A673 (cell line): ENCODE measurements at regions of chr22 and their contacts with region 1.

Region 1: DNA sequence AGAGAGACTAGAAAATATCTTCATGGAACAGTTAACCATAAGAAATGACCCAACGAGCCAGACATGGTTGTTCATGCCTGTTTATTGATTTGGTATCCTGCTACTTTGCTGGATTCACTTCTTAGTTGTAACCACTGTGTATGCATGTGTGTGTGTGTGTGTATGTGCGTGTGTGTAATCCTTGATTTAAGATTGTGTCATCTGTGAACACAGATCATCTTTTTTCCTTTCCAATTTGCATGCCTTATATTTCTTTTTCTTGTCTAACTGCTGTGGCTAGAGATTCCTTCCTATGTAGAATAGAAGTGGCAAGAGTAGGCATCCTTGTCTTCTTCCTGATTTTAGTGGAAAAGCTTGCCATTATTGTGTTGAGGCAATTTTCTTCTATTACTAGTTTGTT is 16.4 kb upstream of the CLTCL1 start:
- DNase-seq: no peak
- H3K4me3 ChIP-seq: no peak overlapping the region
- H3K27ac ChIP-seq: no peak overlapping the region
- H3K4me1 ChIP-seq: no peaks in the 10 kb centered on the region
- H3K27me3 ChIP-seq: no peaks in the 10 kb centered on the region
- CTCF ChIP-seq: no peak

Region 2: DNA sequence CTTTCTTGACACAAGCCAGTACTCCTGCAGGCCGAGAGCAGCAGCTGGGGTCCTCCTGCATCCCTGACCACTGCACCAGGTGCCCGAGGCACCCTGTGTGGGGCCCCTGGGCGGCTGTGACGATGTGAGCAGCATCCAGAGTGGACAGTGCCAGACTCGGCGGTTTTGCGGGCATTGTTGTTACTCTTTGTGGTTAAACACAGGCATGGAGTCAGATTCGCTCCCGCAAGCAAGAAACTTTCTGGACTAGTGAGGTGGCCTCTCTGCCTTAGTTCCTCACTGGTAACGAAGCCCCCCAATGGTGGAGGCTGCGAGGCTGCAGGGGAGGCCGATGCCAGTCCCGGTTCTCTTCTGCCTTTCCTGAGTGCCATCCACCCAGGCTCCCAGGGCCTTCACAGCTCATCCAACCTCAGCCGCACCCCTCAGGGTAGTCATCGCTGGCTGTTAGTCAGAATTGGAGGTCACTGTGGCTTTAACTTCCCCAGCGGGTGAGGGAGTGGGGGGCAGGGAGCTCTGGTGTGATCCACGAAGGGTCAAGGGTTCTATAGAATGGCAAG is 220.1 kb after region 1 on chr22:
- CTCF ChIA-PET with region 1: interaction called, 11 read pairs
- POLR2A ChIA-PET with region 1: no interaction called
- intact Hi-C with region 1: no loop called
- DNase-seq: no peak
- H3K4me3 ChIP-seq: no peak overlapping the region
- H3K27ac ChIP-seq: no peak overlapping the region
- H3K4me1 ChIP-seq: peaks cover 5% of the 10 kb centered on the region
- H3K27me3 ChIP-seq: peaks cover 9% of the 10 kb centered on the region
- CTCF ChIP-seq: no peak